ENCODE measurements at regions of chr12 and their contacts with region 1.

Region 1: GRCh38 chr12:95653761-95654546 is 102.7 kb upstream of the USP44 start:
- DNase-seq: no peak

Region 2: DNA sequence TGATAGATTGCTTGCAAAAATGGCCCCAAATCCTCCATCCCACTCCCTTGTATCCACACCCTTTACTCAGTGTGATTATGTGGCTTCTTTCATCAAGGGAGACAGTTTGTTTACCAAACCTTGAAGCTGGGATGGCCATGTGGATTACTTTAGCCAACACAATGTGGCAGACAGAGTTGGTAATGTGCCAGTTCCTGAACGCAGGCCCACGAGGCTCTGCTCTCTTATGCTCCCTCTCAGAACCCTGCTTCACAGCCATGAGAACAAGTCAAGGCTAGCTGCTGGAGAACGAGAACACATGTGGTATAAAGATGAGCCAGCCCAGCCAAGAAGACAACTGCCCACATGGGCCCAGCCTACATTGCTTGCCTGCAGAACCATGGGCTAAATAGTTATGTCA is 812.8 kb before region 1 on chr12:
- intact Hi-C with region 1: no loop called
- DNase-seq: no peak

Region 3: GRCh38 chr12:96208801-96209549 is 555.0 kb after region 1 on chr12:
- intact Hi-C with region 1: loop called in 1 of 2 experiments (anchors 5 kb)
- DNase-seq: no peak